ENCODE measurements at regions of chr12 and their contacts with region 1.

Region 1: GRCh38 chr12:2387103-2387834 is 334.5 kb downstream of the CACNA1C start:
- DNase-seq: peak; percentile 73
- ATAC-seq: peak; percentile 91
- H3K4me3 Mint-ChIP-seq: no peak overlapping the region
- H3K27ac Mint-ChIP-seq: no peak overlapping the region
- H3K4me1 Mint-ChIP-seq: no peaks in the 10 kb centered on the region
- H3K27me3 Mint-ChIP-seq: peaks cover 9% of the 10 kb centered on the region

Region 2: DNA sequence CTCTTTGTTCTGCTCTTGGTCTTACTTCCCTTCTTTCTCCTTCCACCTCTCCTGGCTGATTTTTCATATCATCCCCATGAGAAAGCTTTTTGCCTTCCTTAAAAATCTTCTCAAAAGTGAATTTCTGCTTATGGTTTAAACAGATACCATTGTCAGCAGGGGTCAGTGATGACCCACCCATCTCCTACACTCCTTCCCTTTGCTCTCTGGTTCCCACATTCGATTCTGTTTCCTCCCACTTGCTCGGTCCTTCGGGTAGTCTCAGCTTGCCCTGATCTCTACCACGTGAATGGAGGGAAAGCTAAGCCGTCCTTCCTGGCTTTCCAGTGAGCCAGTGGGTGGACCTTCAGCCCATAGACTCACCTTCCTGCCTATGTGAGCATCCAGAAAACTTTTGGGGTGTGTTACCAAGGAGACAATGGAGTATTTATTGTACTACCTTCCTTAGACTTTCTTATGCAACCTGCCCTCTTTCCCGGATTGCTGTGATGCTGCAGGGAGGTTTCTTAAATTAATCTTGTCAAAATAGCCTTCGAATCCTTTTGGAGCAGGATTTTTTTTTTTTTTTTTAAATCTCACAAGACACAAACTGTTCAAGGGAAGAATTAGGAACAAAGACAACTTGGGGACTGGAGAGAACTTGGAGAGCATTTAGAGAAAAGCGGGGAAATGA is 28.1 kb before region 1 on chr12:
- CTCF ChIA-PET with region 1: interaction called, 5 read pairs
- POLR2A ChIA-PET with region 1: no interaction called
- intact Hi-C with region 1: loop called in 1 of 2 experiments (anchors 2 kb)
- DNase-seq: no peak
- ATAC-seq: no peak
- H3K4me3 Mint-ChIP-seq: no peak overlapping the region
- H3K27ac Mint-ChIP-seq: no peak overlapping the region
- H3K4me1 Mint-ChIP-seq: peaks cover 26% of the 10 kb centered on the region
- H3K27me3 Mint-ChIP-seq: peaks cover 11% of the 10 kb centered on the region

Region 3: DNA sequence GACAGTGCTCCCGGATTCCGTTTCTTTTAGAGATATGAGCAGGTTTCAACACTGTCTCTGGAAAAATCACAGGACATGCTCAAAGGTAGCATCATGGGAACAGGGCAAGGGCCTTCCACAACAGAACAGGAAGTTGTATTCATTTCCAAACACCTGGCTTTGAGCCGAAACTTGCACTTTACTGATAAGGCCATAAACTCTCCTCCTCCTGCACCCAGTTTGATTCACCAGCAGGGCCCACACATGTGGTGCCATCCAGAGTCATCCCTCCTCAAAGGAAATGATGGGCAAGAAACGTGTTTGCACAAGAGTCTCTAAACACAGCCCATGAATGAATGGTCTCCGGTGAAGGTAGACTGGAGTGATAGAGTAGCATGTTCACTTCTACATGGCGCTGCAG is 139.1 kb after region 1 on chr12:
- CTCF ChIA-PET with region 1: no interaction called
- POLR2A ChIA-PET with region 1: no interaction called
- intact Hi-C with region 1: no loop called
- DNase-seq: no peak
- ATAC-seq: no peak
- H3K4me3 Mint-ChIP-seq: no peak overlapping the region
- H3K27ac Mint-ChIP-seq: no peak overlapping the region
- H3K4me1 Mint-ChIP-seq: no peaks in the 10 kb centered on the region
- H3K27me3 Mint-ChIP-seq: peaks cover 5% of the 10 kb centered on the region

Region 4: GRCh38 chr12:2583091-2583497 is 195.8 kb after region 1 on chr12:
- CTCF ChIA-PET with region 1: interaction called, 4 read pairs
- POLR2A ChIA-PET with region 1: no interaction called
- intact Hi-C with region 1: loop called in 1 of 2 experiments (anchors 5 kb)
- DNase-seq: peak; percentile 83
- ATAC-seq: peak; percentile 95
- H3K4me3 Mint-ChIP-seq: no peak overlapping the region
- H3K27ac Mint-ChIP-seq: no peak overlapping the region
- H3K4me1 Mint-ChIP-seq: no peaks in the 10 kb centered on the region
- H3K27me3 Mint-ChIP-seq: peaks cover 43% of the 10 kb centered on the region

Region 5: DNA sequence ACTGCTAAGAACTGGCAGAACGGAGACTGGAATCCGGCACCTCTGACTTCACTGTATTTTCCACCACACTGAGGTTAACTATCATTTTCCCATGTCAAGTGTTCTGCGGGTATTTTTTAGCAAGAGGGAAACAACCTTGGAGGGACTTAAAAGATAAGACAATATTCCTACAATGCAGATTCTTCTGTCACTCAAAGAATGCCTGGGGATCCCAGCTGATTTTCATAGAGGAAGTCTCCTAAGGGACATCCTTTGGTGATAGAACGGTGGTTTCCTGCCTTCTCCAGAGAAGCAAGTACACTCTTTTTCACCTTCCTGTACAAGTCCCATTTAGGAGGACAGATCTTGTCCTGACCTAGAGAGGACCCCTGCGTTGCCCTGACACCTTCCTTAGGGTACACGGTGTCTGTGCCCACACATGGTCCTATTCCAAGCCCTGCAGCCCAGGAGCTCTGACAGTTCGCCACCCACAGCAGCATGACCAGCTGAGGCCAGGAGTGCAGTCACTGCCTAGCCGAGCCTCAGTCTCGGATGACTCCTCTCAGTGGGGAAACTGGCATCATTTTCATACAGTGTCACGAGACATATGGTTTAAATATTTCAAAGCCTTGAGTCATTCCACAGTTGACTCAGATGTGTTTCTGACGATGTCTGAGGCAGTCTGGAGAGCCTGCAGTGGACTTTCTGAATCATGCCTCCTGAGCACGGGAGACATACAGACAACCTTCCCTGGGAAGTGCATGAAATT is 226.2 kb after region 1 on chr12:
- CTCF ChIA-PET with region 1: no interaction called
- POLR2A ChIA-PET with region 1: no interaction called
- intact Hi-C with region 1: loop called in 1 of 2 experiments (anchors 1 kb)
- DNase-seq: peak; percentile 78
- ATAC-seq: peak; percentile 99
- H3K4me3 Mint-ChIP-seq: no peak overlapping the region
- H3K27ac Mint-ChIP-seq: no peak overlapping the region
- H3K4me1 Mint-ChIP-seq: peaks cover 13% of the 10 kb centered on the region
- H3K27me3 Mint-ChIP-seq: peaks cover 36% of the 10 kb centered on the region

Region 6: DNA sequence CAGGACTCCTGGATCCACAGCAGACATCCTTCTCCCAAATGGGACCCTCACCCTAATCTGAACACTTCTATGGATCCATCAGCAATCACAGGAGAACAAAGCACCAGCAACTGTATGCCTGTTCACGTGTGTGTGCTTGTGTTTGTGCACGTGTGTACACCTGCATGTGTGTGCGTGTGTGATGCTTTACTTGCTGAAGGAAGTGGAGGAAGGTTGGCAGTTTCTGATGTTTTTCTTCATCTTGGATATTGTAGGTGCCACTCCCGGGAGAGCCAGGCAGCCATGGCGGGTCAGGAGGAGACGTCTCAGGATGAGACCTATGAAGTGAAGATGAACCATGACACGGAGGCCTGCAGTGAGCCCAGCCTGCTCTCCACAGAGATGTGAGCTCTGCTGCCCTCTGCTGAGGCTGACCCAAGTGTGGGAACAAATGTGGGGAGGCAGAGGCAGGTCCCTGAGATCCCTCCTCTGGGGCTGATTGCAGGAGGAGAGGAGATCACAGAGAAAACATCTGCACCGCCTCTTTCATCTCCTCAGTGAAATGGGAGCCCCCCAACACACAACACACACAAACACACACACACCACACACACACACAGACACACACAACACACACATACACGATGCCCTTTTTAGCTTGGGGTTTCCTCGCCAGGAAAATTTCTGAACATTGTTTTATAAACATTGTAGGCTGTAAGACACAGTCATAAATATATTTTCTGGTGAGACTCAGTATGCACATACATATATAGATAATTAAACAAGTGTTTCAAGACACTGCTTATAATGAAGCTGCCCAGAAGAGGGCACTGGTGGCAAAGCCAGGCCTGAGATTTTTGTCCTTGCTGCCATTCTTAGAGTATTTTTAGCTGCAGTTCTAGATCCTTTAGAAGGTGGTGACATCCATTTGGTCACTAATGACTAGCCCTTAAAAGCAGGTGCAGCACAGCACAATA is 295.3 kb after region 1 on chr12:
- CTCF ChIA-PET with region 1: no interaction called
- POLR2A ChIA-PET with region 1: no interaction called
- intact Hi-C with region 1: loop called in 1 of 2 experiments (anchors 1 kb)
- DNase-seq: peak; percentile 62
- ATAC-seq: peak; percentile 74
- H3K4me3 Mint-ChIP-seq: no peak overlapping the region
- H3K27ac Mint-ChIP-seq: peak overlapping the region; percentile 86
- H3K4me1 Mint-ChIP-seq: peaks cover 6% of the 10 kb centered on the region
- H3K27me3 Mint-ChIP-seq: no peaks in the 10 kb centered on the region

Measured in activated CD4-positive, alpha-beta T cell treated with anti-CD3 and anti-CD28 coated beads for 36 hours (primary cell).